Motor neuron (in vitro differentiated cells): ENCODE measurements at regions of chr1 and their contacts with region 1.

Region 1: DNA sequence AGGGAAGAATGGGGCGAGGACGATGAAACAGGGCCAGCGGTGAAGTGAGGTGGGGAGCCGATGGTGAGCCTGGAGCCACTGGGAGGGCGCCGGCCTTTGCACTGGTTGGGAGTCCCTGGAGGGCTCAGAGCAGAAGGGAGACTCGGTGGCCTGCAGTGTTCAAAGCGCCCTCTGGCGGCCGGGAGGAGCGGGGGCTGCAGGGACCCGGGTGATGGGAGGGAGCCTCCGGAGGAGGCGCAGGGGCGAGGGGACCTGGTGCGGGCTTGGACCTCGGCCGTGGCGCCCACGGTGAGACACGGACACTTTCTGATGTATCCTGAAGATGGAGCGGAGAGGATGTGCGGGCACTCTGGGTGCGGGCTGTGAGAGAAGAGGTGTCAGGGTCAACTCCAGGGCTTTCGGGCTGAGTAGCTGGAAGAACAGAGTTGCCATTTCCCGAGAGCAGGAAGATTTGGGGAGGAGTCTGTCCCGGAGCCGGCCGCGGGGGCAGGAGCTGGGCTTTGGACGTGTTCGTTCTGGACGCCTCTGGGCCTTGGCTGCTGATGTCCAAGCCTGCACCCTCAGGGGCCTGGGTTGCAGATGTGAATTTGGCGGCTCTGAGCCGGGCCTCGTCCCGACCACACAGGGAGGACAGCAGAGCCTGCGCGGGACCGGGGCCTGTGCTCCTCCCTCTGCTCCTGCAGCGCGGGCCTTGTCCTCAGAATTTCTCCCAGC is 29.7 kb downstream of the HEYL start:
- ATAC-seq: peak; percentile 23 to 97 (median 52)
- H3K4me3 ChIP-seq: no peak overlapping the region
- H3K27ac ChIP-seq: no peak overlapping the region
- H3K4me1 ChIP-seq: no peaks in the 10 kb centered on the region

Region 2: GRCh38 chr1:39653546-39654031 is 43.8 kb after region 1 on chr1:
- in situ Hi-C with region 1: loop called in 2 of 9 experiments (anchors 10 kb)
- ATAC-seq: peak; percentile 72 to 88 (median 80)
- H3K4me3 ChIP-seq: no peak overlapping the region
- H3K27ac ChIP-seq: no peak overlapping the region
- H3K4me1 ChIP-seq: peaks cover 0 to 3% of the 10 kb centered on the region in 2 donors

Region 3: DNA sequence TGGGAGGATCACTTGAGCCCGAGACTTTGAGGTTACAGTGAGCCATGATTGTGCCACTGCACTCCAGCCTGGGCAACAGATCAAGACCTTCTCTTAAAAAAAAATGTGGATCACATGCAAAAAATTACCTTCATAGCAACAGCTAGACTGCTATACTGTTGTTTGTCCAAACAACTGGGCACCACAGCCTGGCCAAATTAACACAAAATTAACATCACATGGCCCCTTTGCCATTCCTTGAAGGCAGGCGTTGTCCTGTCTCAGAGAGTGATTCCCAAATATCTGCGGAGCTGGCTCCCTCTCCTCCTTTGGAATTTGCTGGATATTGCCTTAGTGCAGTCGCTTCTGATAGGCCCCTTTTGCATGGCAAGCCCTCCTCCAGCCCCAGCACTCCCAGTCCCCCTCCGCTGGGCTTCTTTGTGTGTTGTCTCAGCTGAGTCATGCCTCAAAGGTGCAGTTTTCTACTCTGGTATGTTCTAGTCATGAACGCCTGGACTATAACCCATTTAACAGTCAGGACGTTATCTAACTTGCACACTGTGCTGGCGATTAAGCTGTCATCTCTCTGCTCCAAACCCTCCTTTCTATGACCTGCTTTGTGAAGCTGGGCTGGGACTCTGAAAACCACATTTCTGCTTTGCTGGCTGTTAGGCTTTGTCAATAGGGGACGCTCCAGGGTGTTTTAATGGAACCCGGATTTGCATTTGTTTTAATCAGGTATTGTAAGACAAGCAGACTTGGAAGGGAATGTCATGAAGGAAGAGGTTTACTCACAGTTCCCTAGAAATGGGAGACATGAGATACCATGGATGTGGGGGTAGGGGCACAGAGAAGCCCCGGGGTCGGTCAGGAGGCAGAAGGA is 101.6 kb after region 1 on chr1:
- in situ Hi-C with region 1: loop called in 4 of 9 experiments (anchors 10 to 25 kb)
- ATAC-seq: peak in 7 of 8 experiments; percentile 41 to 74 (median 57)
- H3K4me3 ChIP-seq: no peak overlapping the region
- H3K27ac ChIP-seq: no peak overlapping the region
- H3K4me1 ChIP-seq: peaks cover 12 to 21% of the 10 kb centered on the region in 2 donors

Region 4: DNA sequence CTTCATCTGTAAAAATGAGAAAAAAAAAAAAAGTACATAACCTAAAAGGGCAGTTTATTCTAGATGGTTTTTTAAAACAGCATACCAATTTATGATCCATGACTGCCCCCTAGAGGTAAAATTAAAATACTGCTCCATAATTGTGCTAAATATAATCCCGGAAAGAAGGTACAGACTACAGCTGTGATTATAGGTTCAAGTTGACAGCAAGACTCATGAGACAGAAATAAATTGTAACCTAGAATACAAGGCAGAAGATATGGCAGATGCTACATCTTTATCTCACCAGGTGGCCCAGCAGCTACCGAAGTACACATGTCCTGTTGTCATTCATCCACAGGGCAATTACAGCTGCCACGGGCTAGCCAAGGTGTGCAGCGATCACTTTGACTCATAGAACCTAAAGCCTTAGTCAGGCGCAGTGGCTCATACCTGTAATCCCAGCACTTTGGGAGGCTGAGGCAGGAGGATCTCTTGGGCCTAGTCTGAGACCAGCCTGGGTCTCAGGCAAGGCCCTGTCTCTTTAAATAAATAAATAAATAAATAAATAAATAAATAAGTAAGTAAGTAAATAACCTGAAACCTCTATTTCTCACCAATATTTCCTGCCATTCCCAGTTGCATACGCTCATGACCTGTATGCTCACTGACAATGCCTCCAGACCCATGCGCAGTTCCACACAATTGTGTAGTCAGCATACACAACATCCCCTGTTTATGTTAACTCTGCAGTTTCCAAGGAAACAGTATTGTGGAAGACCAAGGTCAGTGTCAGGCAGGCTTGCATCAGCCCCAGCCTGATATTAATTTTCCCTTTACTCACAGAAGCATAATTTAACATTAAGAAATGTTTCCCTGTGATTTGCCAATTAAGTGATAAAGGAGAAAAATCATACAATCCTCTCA is 110.6 kb after region 1 on chr1:
- in situ Hi-C with region 1: loop called in 5 of 9 experiments (anchors 10 to 25 kb)
- ATAC-seq: peak; percentile 56 to 86 (median 71)
- H3K4me3 ChIP-seq: no peak overlapping the region
- H3K27ac ChIP-seq: no peak overlapping the region
- H3K4me1 ChIP-seq: peaks cover 3 to 9% of the 10 kb centered on the region in 2 donors